T-cell (primary cell): ENCODE measurements at regions of chr6 and their contacts with region 1.

Region 1: GRCh38 chr6:170554013-170554795 is at the start of gene TBP:
- DNase-seq: peak; percentile 93 to 99 (median 98)
- ATAC-seq: peak; percentile 92 to 96 (median 94)
- H3K4me3 ChIP-seq: peak within 1 kb of the TSS; percentile 86 to 100
- H3K4me3 Mint-ChIP-seq: no peak within 1 kb of the TSS
- H3K27ac ChIP-seq: peak within 1 kb of the TSS; percentile 88
- H3K27ac Mint-ChIP-seq: no peak within 1 kb of the TSS
- H3K4me1 ChIP-seq: peaks cover 25% of the 10 kb centered on the region in 2 experiments
- H3K4me1 Mint-ChIP-seq: peaks cover 21 to 39% (median 38%) of the 10 kb centered on the region in 3 donors
- H3K27me3 ChIP-seq: no peaks in the 10 kb centered on the region
- H3K27me3 Mint-ChIP-seq: no peaks in the 10 kb centered on the region
- total RNA-seq, gene TBP: 12.4 to 35.0 (median 25.6) TPM

Region 2: DNA sequence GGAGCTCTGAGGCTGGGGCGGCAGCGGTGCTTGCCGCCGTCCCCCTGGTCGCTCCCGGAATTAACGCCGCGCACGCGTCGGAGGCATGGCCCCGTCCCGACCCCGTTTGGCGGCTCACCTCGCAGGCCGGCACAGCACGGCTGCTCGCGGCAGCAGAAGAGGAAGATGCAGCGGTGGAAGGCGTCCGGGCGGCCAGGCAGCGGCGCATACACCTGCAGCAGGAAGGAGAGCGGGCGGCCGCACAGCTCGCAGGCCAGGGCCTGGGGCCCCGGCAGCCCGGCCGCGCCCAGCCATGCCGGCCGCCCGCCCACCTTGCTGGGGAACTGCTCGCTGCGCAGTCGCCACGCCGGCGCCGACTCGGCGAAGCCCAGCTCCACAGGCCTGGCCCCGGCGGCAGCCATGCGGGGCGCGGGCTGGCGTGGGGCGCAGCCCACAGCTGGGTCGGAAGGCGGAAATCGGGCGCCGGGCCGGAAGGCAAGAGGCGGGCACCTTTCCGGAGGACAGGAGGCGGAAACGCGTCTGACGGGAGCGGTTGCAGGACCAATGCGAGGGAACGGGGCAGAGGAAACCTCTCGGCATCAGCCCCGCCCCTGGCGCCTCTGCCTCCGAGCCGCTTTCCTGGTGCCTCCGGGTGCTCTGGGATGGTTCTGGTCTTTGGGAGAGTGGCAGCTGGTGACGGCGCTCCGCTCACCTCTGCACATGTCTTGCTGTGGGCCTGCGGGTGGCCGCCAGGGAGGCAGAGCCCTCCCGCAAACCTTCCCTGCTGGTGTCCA is 30.2 kb after region 1 on chr6 and contains the start of gene PDCD2:
- CTCF ChIA-PET with region 1: interaction called, 3 to 22 read pairs
- POLR2A ChIA-PET with region 1: interaction called, 4 to 9 read pairs
- DNase-seq: peak; percentile 75 to 95 (median 90)
- ATAC-seq: peak; percentile 95 to 98 (median 96)
- H3K4me3 ChIP-seq: peak within 1 kb of the TSS; percentile 81 to 91
- H3K4me3 Mint-ChIP-seq: peak within 1 kb of the TSS; percentile 97
- H3K27ac ChIP-seq: peak within 1 kb of the TSS; percentile 82
- H3K27ac Mint-ChIP-seq: peak within 1 kb of the TSS; percentile 97 to 98
- H3K4me1 ChIP-seq: peaks cover 9 to 14% of the 10 kb centered on the region in 2 experiments
- H3K4me1 Mint-ChIP-seq: peaks cover 37 to 41% (median 37%) of the 10 kb centered on the region in 3 donors
- H3K27me3 ChIP-seq: peaks cover 0 to 2% of the 10 kb centered on the region in 2 experiments
- H3K27me3 Mint-ChIP-seq: no peaks in the 10 kb centered on the region
- total RNA-seq, gene PDCD2: 54.2 to 77.1 (median 68.1) TPM